HEK293T (cell line): ENCODE measurements at regions of chr11 and their contacts with region 1.

Region 1: DNA sequence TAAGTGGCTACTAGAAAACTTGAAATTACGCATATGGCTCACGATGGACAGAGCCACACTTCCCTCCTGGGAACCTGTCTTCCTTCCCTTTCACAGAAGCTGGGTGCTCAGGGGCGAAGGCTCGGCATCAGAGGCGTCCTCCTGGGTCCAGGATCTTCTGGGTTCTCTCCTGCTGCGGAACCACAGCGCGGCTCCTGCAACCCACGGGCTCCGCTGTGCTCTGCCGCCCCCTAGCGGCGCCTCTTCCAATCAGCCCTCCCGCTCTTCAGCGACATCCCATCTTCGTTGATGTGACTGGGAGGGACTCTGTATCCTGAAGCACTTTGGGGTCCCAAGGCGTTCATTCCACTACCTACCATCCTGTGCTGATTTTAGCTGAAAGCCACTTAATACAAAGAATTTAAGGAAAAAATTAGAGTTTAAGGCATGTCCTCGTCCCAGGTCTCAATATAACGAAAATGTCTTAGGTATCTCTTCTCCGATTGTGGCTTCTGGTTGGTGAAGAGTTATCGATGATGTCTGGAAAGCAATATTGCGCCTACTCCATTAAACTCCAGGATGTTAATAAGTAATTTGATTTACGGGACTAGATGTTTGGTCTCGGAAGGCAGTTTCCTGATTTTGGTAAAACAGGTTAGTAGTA is 14.8 kb upstream of the RPS3 start:
- DNase-seq: peak; percentile 82

Region 2: DNA sequence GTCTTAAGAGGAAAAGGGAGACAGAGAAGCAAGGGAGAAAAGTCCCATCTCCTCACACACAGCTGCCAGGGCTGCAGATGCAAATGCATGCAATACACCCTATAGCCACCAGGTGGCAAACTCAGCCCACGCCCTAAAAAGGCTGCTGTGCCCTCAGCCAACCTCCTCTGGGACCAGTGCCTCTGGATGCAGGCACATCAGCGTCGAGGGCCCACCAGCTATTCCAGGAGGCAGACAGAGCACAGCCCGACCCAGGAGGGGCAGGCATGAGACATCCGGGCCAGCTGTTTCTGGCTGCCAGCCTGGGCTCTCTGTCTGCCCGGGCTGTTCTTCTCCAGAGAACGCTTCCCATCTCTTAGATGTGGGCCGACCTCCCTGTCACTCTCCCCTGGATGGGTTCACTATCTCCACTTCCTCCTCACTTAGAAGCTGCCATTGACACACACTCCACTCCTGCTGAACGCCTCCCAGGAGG is 104.3 kb before region 1 on chr11:
- CTCF ChIA-PET with region 1: interaction called, 24 read pairs
- POLR2A ChIA-PET with region 1: no interaction called
- DNase-seq: peak; percentile 88

Region 3: DNA sequence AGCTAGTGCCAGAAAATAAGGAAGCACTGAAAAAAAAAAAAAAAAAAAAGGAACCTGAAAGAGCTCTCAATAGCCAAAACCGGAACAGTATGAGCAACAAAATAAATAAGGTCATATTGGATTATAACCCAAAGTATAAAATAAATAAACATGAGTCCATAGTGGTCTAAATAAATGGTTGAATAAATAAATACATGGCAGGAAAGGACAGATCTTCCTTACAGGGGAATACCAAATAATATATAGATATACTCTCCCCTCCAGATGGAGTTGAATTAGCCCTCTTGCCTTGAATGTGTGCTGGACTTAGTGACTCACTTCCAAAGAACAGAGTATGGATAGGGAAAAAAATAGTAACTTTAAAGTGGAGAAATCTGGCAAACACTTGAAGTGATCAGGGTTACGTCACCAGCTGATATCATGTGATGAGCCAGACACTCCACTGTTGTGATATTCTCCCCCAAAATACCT is 18.8 kb before region 1 on chr11:
- CTCF ChIA-PET with region 1: no interaction called
- POLR2A ChIA-PET with region 1: no interaction called
- DNase-seq: no peak